Head of caudate nucleus (tissue), 42 donors: ENCODE measurements at regions of chr1 and their contacts with region 1.

Region 1: DNA sequence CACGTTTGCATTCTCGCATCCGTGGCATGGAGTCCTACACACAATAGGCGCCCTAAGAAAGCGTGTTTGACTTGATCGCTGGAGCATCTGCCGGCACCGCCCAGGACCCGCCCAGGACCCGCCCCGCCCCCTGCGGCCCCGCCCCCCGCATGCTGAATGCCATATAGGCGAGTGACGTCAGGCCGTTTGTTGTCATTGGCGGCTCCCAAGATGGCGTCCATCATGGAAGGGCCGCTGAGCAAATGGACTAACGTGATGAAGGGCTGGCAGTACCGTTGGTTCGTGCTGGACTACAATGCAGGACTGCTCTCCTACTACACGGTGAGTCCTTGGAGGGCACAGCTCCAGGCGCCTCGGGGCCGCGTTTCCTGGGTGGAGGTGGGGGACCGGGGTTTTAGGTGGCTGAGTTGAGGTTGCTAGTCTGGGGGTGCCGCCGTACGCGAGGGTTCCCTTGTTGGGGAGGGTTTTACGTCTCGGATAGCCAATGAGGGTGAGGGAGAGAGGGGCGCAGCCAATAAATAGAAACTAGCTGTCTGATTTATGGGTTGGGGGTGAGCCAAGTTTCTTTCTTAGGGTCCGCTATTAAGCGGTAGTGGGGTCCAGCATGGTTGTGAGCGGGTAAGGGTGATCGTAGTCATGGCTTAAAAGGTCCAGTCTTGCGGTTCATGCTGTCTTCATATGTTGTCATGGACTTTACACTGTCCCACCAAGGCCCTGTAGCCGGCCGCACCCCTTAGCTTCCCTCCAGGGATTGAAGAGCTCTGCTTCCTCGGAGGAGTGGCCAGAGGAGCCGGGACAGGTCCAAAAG is at the start of gene OSBPL9:
- DNase-seq: peak; percentile 85 to 96 (median 91)

Region 2: DNA sequence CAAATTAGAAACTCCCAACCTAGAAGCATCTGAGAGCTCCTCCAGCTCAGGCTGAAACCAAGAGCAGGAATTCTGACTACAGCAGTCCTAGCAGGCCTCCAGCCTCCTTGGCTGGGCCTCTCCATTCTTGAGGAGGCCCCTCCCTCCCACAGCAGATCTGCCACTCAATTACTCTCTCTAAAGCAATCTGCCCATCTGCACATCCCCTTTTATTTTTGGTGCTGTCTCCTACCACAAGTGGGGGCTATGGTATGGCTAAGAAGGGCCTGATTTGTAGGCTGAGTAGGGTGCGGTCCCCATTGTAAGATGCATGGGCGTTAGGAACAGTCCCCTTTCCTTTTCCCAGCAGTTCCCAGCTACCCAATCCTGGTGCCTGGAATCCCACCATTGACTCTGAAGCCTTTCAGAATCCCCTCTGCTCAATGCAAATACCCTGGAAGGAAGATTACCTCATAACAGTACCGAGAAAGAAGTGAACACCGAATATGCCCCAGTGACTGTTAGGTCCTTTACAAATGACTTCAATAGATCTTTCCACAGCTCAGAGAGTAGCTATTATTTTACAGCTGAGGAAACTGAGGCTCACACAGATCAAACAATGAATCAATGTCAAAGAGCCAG is 275.1 kb before region 1 on chr1:
- intact Hi-C with region 1: no loop called
- DNase-seq: peak in 2 of 42 donors; percentile 15 to 20

Region 3: DNA sequence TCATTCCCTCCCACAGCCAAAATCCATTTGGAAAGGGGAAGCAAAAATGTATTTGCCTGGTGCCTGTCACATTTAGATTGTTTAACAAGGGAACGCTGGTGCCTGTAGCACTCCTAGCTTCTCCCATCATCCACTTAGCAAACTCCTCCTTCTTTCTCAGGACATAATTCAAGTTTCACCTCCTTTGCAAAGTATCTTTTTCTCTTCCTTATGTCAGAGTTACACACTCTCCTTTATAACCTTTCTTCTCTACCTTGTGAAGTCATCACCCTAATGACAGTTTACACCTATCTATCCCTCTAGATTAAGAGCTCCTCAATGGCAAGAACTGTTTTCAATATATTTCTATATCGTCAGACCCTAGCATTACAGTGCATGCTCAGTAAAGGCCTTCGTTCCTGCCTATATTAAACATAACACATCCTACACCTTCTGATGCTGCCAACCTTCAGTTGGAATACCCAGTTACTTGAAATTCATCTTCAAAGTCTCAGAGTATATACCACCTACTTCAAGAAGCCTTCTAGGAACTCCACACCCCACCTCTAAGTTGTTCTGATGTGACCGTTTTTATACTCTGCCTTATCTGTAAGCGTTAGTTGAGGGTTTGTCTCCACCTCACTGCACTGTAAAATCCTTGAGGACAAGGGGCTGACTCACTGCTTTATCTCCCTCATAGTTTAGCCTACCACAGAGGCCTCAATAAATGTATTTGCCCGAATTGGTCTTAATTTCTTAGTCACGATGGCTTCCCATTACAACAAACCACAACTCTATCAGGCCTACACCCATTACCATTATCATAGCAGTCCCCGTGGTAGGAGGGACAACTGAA is 97.0 kb before region 1 on chr1:
- intact Hi-C with region 1: loop called (anchors 10 kb)
- DNase-seq: no peak

Region 4: GRCh38 chr1:51541313-51542174 is 75.6 kb before region 1 on chr1:
- intact Hi-C with region 1: no loop called
- DNase-seq: no peak

Region 5: GRCh38 chr1:51583532-51583931 is 33.6 kb before region 1 on chr1:
- intact Hi-C with region 1: loop called (anchors 5 kb)
- DNase-seq: peak; percentile 74 to 96 (median 90)